Uterus (tissue), 4 donors: ENCODE measurements at regions of chr11 and their contacts with region 1.

Region 1: GRCh38 chr11:117232092-117232878 is at the start of gene RNF214:
- DNase-seq: peak; percentile 65 to 79
- H3K4me3 ChIP-seq: peak within 1 kb of the TSS; percentile 77 to 93
- H3K27ac ChIP-seq: peak within 1 kb of the TSS; percentile 92 to 98
- H3K4me1 ChIP-seq: no peaks in the 10 kb centered on the region
- H3K27me3 ChIP-seq: no peaks in the 10 kb centered on the region
- CTCF ChIP-seq: peak; percentile 68 to 98 (median 94)
- POLR2A ChIP-seq: peak; percentile 53 to 77
- total RNA-seq, gene RNF214: 4.4 to 38.6 (median 11.4) TPM

Region 2: DNA sequence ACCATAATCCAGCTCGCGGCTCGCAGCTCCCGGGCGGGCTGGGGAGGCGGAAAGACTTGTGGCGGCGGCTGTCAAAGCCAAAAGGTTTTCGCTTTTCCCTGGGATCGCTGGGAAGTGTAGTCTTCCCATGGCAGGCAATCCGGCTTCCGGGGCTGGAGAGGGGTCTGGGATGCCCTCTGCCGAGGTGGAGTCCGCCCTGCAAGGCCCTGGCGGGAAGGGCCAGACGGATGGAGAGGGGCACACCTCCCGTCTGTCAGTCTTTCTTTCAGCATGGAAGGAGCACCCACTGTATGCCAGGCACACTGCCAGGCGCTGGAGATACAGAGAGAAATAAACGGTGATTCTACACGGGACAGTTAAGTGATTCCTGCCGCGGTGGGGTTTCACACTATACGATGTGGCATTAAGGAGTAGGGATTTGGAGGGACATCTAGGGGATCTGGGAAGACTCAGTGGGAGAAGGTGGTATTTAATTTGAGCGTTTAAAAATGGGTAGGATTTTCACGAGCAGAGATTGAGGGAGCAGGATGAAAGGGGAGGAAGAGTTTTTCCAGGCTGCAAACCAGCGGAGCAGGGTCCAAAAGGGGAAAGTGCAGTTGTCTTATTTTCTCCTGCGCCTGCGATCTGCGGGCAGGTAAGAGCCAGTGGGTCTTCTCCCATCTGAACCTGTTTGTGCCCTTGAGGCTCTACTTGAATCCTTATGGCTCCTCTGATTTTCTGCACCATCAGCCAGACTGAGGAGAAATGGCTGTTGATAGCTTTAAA is 84.1 kb after region 1 on chr11 and contains the start of gene BACE1:
- intact Hi-C with region 1: loop called (anchors 10 kb)
- DNase-seq: peak; percentile 84 to 85
- H3K4me3 ChIP-seq: peak within 1 kb of the TSS; percentile 55 to 70
- H3K27ac ChIP-seq: peak within 1 kb of the TSS; percentile 48 to 68
- H3K4me1 ChIP-seq: peaks cover 4 to 10% of the 10 kb centered on the region in 2 donors
- H3K27me3 ChIP-seq: no peaks in the 10 kb centered on the region
- CTCF ChIP-seq: peak; percentile 56 to 73 (median 62)
- POLR2A ChIP-seq: peak; percentile 18 to 52
- total RNA-seq, gene BACE1: 17.2 to 103 (median 32.7) TPM